AG04450 (cell line): ENCODE measurements at regions of chr7 and their contacts with region 1.

Region 1: DNA sequence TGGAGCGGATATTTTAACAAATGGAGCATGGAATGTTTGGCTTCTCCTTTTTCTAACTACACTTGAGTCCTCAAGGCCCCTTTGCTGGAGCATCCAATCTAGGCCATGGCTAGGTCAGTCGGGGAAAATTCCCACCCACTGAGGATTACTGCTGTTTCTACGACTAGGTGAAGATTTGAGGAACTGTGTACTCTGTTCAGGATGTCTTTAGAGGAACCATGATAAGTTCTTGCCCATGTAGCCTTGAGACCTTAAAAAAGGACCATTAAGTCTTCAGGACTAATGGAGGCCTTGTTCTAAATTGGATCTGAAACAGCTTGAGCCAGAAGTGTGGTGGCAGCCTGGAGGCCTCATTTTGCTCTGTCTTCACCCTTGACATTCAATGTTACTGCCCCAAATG is 6.2 kb downstream of the AGK start:
- DNase-seq: no peak
- H3K4me3 ChIP-seq: no peak overlapping the region
- H3K27ac ChIP-seq: no peak overlapping the region
- H3K27me3 ChIP-seq: no peaks in the 10 kb centered on the region
- CTCF ChIP-seq: no peak

Region 2: GRCh38 chr7:141276031-141276430 is 281.3 kb before region 1 on chr7:
- CTCF ChIA-PET with region 1: no interaction called
- POLR2A ChIA-PET with region 1: no interaction called
- DNase-seq: no peak
- H3K4me3 ChIP-seq: no peak overlapping the region
- H3K27ac ChIP-seq: no peak overlapping the region
- H3K27me3 ChIP-seq: no peaks in the 10 kb centered on the region
- CTCF ChIP-seq: no peak

Region 3: DNA sequence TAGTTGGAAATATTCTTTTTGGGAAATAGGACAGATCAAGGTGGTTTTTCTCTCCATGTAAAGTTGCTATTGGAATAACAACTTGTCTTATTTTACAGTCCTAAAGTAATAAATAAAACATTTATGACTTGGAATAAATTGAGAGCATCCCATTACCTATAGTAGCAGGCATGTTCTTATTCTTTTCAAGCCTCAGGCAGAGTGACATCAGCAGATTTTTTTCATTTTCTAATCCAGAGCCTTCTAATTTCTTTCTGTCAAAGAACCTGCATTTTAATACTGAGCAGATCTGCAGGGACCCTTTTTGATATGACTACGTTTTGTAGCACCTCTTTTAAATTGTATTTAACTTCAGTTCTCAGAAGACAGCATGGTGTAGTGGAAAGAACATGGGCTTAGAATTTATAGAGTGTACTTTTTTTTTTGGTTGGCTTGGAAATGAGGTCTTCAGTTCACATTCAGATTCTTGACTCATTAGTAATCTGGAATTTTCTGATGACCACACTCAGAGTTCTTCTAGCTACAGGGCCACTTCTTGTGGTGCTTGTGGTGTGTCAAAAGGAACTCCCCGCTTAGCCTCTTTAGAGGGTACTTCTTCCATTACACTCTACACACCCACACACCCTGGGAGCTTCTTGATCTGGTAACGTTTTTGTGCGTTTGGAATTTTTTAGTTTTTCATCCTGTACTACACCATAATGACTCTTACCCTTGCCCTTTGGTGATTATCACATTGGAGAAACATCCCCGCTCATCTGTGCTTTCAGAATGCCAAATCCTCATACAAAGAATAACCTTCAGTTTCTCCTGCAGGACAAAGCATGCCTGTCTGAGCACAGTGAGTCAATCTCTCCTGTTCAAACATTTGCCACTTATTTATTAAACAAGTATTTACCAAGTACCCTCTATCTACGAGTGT is 28.5 kb after region 1 on chr7:
- CTCF ChIA-PET with region 1: no interaction called
- POLR2A ChIA-PET with region 1: interaction called, 10 read pairs
- DNase-seq: peak; percentile 76
- H3K4me3 ChIP-seq: peak overlapping the region; percentile 26
- H3K27ac ChIP-seq: peak overlapping the region; percentile 89
- H3K27me3 ChIP-seq: no peaks in the 10 kb centered on the region
- CTCF ChIP-seq: no peak